ENCODE measurements at regions of chr3 and their contacts with region 1.

Region 1: GRCh38 chr3:196942226-196942914 is at the start of gene NCBP2:
- DNase-seq: peak; percentile 100
- H3K4me3 Mint-ChIP-seq: peak within 1 kb of the TSS; percentile 94
- H3K27ac Mint-ChIP-seq: peak within 1 kb of the TSS; percentile 96
- H3K4me1 Mint-ChIP-seq: peaks cover 47% of the 10 kb centered on the region
- H3K27me3 Mint-ChIP-seq: no peaks in the 10 kb centered on the region
- total RNA-seq, gene NCBP2: 53.4 to 57.1 TPM

Region 2: GRCh38 chr3:196867507-196868296 is 74.7 kb before region 1 on chr3 and contains the start of gene SENP5:
- CTCF ChIA-PET with region 1: interaction called, 11 read pairs
- POLR2A ChIA-PET with region 1: no interaction called
- DNase-seq: peak; percentile 89
- H3K4me3 Mint-ChIP-seq: peak within 1 kb of the TSS; percentile 95
- H3K27ac Mint-ChIP-seq: peak within 1 kb of the TSS; percentile 99
- H3K4me1 Mint-ChIP-seq: peaks cover 29% of the 10 kb centered on the region
- H3K27me3 Mint-ChIP-seq: peaks cover 3% of the 10 kb centered on the region
- total RNA-seq, gene SENP5: 31.1 to 32.4 TPM

Region 3: DNA sequence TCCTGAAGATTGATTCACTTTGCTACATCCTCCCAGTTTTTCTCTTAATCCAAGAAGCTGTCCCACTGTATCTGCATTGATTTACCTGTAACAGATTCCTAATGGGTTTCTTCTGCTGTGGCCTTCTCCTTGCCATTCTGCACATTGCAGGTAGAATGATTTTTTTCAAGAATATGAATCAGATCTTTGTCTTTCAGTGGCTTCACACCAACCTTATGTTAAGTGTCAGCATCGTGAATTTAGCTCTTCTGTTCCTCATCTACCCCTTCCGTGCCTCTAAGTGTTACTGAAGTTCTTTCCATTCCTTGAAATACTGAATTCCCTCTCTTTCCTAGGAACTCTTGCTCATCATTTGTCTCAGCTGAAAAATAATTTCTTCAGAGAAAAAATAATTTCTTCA is 67.1 kb before region 1 on chr3:
- CTCF ChIA-PET with region 1: interaction called, 13 read pairs
- POLR2A ChIA-PET with region 1: no interaction called
- DNase-seq: no peak
- H3K4me3 Mint-ChIP-seq: no peak overlapping the region
- H3K27ac Mint-ChIP-seq: no peak overlapping the region
- H3K4me1 Mint-ChIP-seq: peaks cover 28% of the 10 kb centered on the region
- H3K27me3 Mint-ChIP-seq: no peaks in the 10 kb centered on the region

Region 4: GRCh38 chr3:196954832-196955231 is 12.5 kb after region 1 on chr3:
- CTCF ChIA-PET with region 1: interaction called, 14 read pairs
- POLR2A ChIA-PET with region 1: no interaction called
- DNase-seq: no peak
- H3K4me3 Mint-ChIP-seq: no peak overlapping the region
- H3K27ac Mint-ChIP-seq: no peak overlapping the region
- H3K4me1 Mint-ChIP-seq: no peaks in the 10 kb centered on the region
- H3K27me3 Mint-ChIP-seq: peaks cover 10% of the 10 kb centered on the region

Region 5: GRCh38 chr3:196969660-196970546 is 27.5 kb after region 1 on chr3:
- CTCF ChIA-PET with region 1: interaction called, 15 read pairs
- POLR2A ChIA-PET with region 1: no interaction called
- DNase-seq: peak; percentile 59
- H3K4me3 Mint-ChIP-seq: peak overlapping the region; percentile 74
- H3K27ac Mint-ChIP-seq: peak overlapping the region; percentile 68
- H3K4me1 Mint-ChIP-seq: peaks cover 18% of the 10 kb centered on the region
- H3K27me3 Mint-ChIP-seq: peaks cover 19% of the 10 kb centered on the region

Measured in activated CD4-positive, alpha-beta T cell treated with anti-CD3 and anti-CD28 coated beads, Interleukin-2, amount 10 ng/mL, durations not matched to agents 7 days and 5 days (primary cell).